ENCODE measurements at regions of chr13 and their contacts with region 1.

Region 1: DNA sequence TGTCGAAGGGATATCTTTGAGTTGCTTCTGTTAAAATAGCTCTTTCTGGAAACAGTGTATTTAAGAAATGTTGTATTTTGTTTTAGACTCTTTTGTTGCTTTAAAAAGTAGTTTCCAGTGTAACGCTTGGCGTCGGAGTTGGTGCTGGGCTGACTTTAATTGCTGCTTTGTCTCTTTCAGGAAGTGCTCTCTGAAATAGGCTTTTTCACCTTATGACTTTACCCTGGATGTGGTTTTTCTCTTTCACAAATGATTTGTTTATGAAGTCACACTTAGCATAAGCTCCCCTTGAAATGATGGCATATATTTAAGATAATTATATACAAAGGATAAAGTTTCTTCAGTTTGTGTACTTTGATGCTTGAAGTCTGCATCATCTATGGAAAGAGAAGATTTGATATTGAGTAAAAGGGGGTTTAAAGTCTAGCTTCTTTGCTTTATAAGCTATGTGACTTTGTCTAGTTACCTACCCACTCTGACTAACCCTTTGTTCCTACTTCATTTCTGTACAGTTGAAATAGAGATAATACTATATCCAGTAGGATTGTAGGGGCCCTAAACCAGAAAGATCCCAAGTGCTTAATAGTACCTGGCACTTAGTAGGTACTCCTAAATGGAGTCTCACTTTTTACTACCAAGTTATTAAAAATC is at the start of gene GPR18:
- DNase-seq: no peak
- ATAC-seq: no peak
- H3K4me3 ChIP-seq: no peak within 1 kb of the TSS
- H3K27ac ChIP-seq: peak within 1 kb of the TSS; percentile 25
- H3K4me1 ChIP-seq: peaks cover 57% of the 10 kb centered on the region
- H3K27me3 ChIP-seq: no peaks in the 10 kb centered on the region
- CTCF ChIP-seq: no peak
- total RNA-seq, gene GPR18: 0.27 TPM in 1 of 4 donors, not detected in the others

Region 2: GRCh38 chr13:99218969-99219368 is 39.4 kb before region 1 on chr13:
- intact Hi-C with region 1: loop called in 1 of 2 experiments (anchors 5 kb)
- DNase-seq: no peak
- ATAC-seq: no peak
- H3K4me3 ChIP-seq: peak overlapping the region; percentile 29
- H3K27ac ChIP-seq: peak overlapping the region; percentile 77
- H3K4me1 ChIP-seq: peaks cover 75% of the 10 kb centered on the region
- H3K27me3 ChIP-seq: no peaks in the 10 kb centered on the region
- CTCF ChIP-seq: no peak

Region 3: DNA sequence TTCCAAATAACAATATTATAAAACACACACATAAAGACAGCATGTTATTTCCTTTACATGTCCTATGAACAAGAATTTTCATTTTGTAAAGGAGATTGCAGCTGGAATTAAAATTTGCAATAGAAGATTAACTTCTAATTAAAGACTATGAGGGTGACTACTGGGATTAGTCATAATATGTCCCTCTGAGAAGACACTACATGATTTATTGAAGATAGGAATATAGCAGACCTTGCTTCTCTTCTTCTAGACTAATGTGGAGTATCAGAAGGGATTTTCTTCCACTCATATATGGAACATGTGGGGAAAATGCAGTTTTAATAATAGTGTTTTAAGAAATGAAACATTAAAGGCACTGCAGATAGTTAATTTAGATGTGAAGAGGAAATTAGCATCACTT is 1980.2 kb after region 1 on chr13:
- intact Hi-C with region 1: no loop called
- DNase-seq: no peak
- ATAC-seq: no peak
- H3K4me3 ChIP-seq: no peak overlapping the region
- H3K27ac ChIP-seq: no peak overlapping the region
- H3K4me1 ChIP-seq: no peaks in the 10 kb centered on the region
- H3K27me3 ChIP-seq: no peaks in the 10 kb centered on the region
- CTCF ChIP-seq: no peak

Measured in psoas muscle (tissue), 8 donors.